CD14-positive monocyte (primary cell): ENCODE measurements at regions of chr2 and their contacts with region 1.

Region 1: GRCh38 chr2:136135921-136136906 is 18.3 kb upstream of the CXCR4 start:
- DNase-seq: peak; percentile 30 to 53 (median 34)
- H3K4me3 ChIP-seq: peak overlapping the region in 2 of 3 experiments; percentile 6 to 66
- H3K4me3 Mint-ChIP-seq: peak overlapping the region; percentile 57 to 68
- H3K27ac ChIP-seq: peak overlapping the region; percentile 52 to 92
- H3K27ac Mint-ChIP-seq: peak overlapping the region; percentile 86 to 94 (median 89)
- H3K4me1 ChIP-seq: peaks cover 80 to 86% of the 10 kb centered on the region in 2 donors
- H3K4me1 Mint-ChIP-seq: peaks cover 96% of the 10 kb centered on the region
- H3K27me3 ChIP-seq: no peaks in the 10 kb centered on the region
- H3K27me3 Mint-ChIP-seq: peaks cover 0 to 2% (median 0%) of the 10 kb centered on the region in 3 donors
- CTCF ChIP-seq: no peak

Region 2: GRCh38 chr2:136238286-136239078 is 102.3 kb after region 1 on chr2:
- intact Hi-C with region 1: loop called in 1 of 2 experiments (anchors 5 kb)
- DNase-seq: peak; percentile 93 to 98 (median 97)
- H3K4me3 ChIP-seq: no peak overlapping the region
- H3K4me3 Mint-ChIP-seq: peak overlapping the region in 1 of 2 donors; percentile 63
- H3K27ac ChIP-seq: peak overlapping the region; percentile 98 to 99
- H3K27ac Mint-ChIP-seq: peak overlapping the region; percentile 98 to 100 (median 99)
- H3K4me1 ChIP-seq: peaks cover 29 to 30% of the 10 kb centered on the region in 2 donors
- H3K4me1 Mint-ChIP-seq: peaks cover 55% of the 10 kb centered on the region
- H3K27me3 ChIP-seq: no peaks in the 10 kb centered on the region
- H3K27me3 Mint-ChIP-seq: peaks cover 0 to 9% (median 5%) of the 10 kb centered on the region in 3 donors
- CTCF ChIP-seq: no peak